ENCODE measurements at regions of chr9 and their contacts with region 1.

Region 1: GRCh38 chr9:113993838-113994540 is 84.1 kb downstream of the AMBP start:
- DNase-seq: no peak
- H3K4me3 ChIP-seq: no peak overlapping the region
- H3K27ac ChIP-seq: no peak overlapping the region
- H3K4me1 ChIP-seq: peaks cover 38% of the 10 kb centered on the region
- H3K27me3 ChIP-seq: no peaks in the 10 kb centered on the region
- CTCF ChIP-seq: no peak
- POLR2A ChIP-seq: no peak

Region 2: DNA sequence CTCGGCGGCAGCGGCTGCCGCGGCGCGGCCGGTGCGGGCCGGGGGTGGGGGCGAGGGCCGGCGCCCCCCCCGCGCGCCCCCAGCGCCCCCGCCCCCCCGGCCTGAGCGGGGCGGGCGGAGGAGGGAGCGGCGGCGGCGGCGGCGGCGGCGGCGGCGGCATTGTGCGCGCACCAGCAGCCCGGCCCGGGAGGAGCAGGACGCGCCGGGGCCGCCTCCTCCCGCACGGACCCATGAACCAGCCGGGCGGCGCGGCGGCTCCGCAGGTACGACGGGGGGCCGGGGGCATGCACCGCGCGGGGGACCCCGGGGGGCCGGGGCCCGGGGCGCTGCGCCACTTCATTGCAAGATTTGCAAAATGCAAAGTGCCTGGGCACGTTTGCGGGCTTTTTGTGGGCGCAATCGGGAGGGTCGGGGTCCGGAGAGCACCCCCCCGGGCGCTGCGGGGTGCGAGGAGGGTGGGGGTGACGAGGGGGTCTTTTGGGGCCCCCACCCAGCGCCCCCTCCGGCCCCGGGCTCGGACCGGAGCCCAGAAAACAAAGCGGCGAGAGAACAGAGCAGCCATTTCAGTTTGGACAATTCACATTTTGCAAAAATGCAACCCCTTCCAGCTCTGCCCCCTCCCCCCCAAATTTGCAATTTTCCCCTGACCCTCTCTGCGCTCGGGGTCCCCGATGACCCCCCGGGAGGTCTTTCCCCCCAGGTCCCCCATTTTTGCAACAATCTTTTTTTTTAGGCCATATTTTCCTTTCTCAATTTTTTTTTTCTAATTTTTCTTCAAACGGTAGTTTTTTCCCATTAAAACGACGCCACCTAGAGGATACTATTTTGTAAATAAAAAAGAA is 117.6 kb before region 1 on chr9 and contains the start of gene ZNF618:
- intact Hi-C with region 1: loop called (anchors 10 kb)
- DNase-seq: no peak
- H3K4me3 ChIP-seq: peak within 1 kb of the TSS; percentile 93 to 98
- H3K27ac ChIP-seq: peak within 1 kb of the TSS; percentile 86
- H3K4me1 ChIP-seq: peaks cover 22% of the 10 kb centered on the region
- H3K27me3 ChIP-seq: no peaks in the 10 kb centered on the region
- CTCF ChIP-seq: peak in 1 of 3 experiments; percentile 24
- POLR2A ChIP-seq: no peak
- total RNA-seq, gene ZNF618: 7.4 TPM

Region 3: DNA sequence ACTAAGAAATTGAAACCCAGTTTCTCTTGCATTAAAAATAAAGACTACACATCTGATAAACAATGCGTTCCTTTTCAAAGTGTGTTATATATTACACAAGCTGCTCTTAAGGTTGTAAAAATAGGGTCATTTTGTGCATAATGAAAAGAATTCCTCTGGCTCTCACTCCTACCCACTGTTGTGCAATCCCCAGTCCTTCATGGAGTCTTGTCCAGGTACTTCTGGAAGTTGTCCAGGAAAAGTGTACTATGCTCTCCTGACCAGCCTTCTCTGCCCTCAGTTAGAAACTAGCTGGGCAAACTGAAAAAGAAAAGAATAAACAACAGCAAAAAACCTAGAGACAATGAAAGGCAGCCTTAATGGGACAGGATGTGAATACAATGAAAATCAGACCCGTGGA is 1814.1 kb after region 1 on chr9:
- intact Hi-C with region 1: no loop called
- DNase-seq: no peak
- H3K4me3 ChIP-seq: no peak overlapping the region
- H3K27ac ChIP-seq: no peak overlapping the region
- H3K4me1 ChIP-seq: no peaks in the 10 kb centered on the region
- H3K27me3 ChIP-seq: no peaks in the 10 kb centered on the region
- CTCF ChIP-seq: no peak
- POLR2A ChIP-seq: no peak